MCF 10A (cell line): ENCODE measurements at regions of chr17 and their contacts with region 1.

Region 1: GRCh38 chr17:64661976-64662773 is at the start of gene SMURF2:
- DNase-seq: peak; percentile 74
- H3K4me3 Mint-ChIP-seq: peak within 1 kb of the TSS; percentile 99
- H3K27ac Mint-ChIP-seq: peak within 1 kb of the TSS; percentile 97
- H3K4me1 Mint-ChIP-seq: peaks cover 24% of the 10 kb centered on the region
- H3K27me3 Mint-ChIP-seq: no peaks in the 10 kb centered on the region
- CTCF ChIP-seq: no peak
- total RNA-seq, gene SMURF2: 49.2 and 55.8 TPM in 2 replicates

Region 2: DNA sequence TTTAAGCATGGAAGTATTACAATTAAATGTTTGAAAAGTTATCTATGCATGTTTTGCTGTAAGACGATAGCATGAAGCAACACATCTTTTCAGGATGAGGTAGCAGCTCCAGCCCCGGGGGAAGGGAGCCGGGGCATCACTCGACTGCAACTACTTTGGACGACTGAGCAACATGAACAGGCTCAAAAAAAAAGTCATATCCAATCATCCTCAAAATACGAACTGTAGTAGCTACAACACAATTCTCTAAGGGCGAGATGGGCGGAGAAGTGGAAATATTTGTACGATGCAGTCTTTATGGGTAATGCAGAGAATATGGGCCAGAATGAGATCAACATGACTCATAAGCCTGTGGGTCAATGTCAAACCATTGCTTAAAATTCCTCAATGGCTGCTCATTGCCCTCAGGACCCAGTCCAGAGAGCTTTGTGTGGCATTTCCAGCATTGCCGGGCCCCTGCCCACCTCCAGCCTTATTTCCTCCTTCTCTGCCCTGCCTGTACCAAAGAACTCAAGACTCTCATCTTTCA is 17.6 kb after region 1 on chr17:
- CTCF ChIA-PET with region 1: no interaction called
- POLR2A ChIA-PET with region 1: interaction called, 11 read pairs
- intact Hi-C with region 1: no loop called
- DNase-seq: peak; percentile 90
- H3K4me3 Mint-ChIP-seq: peak overlapping the region; percentile 39
- H3K27ac Mint-ChIP-seq: peak overlapping the region; percentile 54
- H3K4me1 Mint-ChIP-seq: peaks cover 20% of the 10 kb centered on the region
- H3K27me3 Mint-ChIP-seq: no peaks in the 10 kb centered on the region
- CTCF ChIP-seq: no peak

Region 3: GRCh38 chr17:64707019-64707591 is 44.9 kb after region 1 on chr17:
- CTCF ChIA-PET with region 1: no interaction called
- POLR2A ChIA-PET with region 1: interaction called, 4 read pairs
- intact Hi-C with region 1: loop called (anchors 5 kb)
- DNase-seq: peak; percentile 98
- H3K4me3 Mint-ChIP-seq: peak overlapping the region; percentile 38
- H3K27ac Mint-ChIP-seq: peak overlapping the region; percentile 73
- H3K4me1 Mint-ChIP-seq: peaks cover 19% of the 10 kb centered on the region
- H3K27me3 Mint-ChIP-seq: no peaks in the 10 kb centered on the region
- CTCF ChIP-seq: no peak

Region 4: DNA sequence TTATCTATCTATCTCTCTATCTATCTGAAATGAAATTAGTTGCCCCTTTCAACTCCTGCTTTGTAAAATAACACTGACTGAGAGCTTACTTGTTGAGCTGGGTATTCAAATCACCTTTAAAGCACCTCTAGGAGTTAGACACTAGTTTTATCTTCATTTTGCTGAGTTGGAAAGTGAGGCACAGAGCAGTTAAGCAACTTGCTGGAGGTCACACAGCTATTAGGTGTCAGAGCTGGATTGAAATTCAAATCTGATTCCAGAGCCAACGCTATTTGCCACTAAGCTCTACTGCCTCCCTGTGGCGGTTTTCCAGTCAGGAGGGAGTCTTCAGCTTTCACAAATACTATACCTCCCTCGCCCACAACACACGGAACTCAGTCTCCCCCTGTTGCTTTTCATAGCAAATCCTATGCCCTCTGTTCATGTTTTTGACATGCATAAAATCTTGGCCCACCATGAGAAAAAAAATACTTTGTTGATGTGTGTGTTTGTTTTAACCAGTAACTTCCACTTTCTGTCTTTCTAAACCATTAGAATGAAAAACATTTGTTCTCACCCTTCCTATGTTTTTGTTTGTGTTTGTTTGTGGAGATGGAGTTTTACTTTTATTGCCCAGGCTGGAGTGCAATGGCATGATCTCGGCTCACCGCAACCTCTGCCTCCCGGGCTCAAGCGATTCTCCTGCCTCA is 74.8 kb after region 1 on chr17:
- CTCF ChIA-PET with region 1: no interaction called
- POLR2A ChIA-PET with region 1: interaction called, 4 read pairs
- intact Hi-C with region 1: loop called (anchors 2 kb)
- DNase-seq: peak; percentile 59
- H3K4me3 Mint-ChIP-seq: no peak overlapping the region
- H3K27ac Mint-ChIP-seq: no peak overlapping the region
- H3K4me1 Mint-ChIP-seq: peaks cover 17% of the 10 kb centered on the region
- H3K27me3 Mint-ChIP-seq: no peaks in the 10 kb centered on the region
- CTCF ChIP-seq: peak; percentile 56

Region 5: DNA sequence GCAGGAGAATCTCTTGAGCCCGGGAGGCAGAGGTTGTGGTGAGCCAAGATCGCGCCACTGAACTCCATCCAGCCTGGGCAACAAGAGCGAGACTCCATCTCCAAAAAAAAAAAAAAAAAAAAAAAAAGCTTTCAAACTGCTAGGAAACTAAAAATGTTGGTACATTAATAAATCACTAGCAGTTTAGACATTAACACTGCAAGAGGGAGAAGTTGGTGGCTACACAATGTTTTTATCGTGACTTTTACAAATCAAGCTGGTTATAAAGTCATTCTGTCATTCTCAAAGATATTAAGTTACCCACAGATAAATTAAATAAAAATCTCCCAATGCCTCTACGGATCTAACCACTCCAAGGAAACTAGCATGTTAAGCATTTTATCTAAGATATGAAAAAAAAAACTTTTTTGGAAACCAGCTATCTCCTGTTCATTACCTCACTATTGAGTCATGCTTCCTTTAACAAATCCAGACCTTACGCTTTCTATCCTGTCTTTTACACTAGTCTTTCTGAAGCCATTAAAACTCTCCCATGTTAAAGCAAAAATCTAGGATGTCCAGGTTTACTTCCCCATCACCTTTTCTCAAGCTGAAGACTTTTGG is 85.9 kb after region 1 on chr17:
- CTCF ChIA-PET with region 1: no interaction called
- POLR2A ChIA-PET with region 1: no interaction called
- intact Hi-C with region 1: no loop called
- DNase-seq: no peak
- H3K4me3 Mint-ChIP-seq: no peak overlapping the region
- H3K27ac Mint-ChIP-seq: no peak overlapping the region
- H3K4me1 Mint-ChIP-seq: no peaks in the 10 kb centered on the region
- H3K27me3 Mint-ChIP-seq: no peaks in the 10 kb centered on the region
- CTCF ChIP-seq: no peak

Region 6: GRCh38 chr17:64773836-64774761 is 111.9 kb after region 1 on chr17:
- CTCF ChIA-PET with region 1: no interaction called
- POLR2A ChIA-PET with region 1: no interaction called
- intact Hi-C with region 1: loop called (anchors 10 kb)
- DNase-seq: peak; percentile 91
- H3K4me3 Mint-ChIP-seq: peak overlapping the region; percentile 66
- H3K27ac Mint-ChIP-seq: no peak overlapping the region
- H3K4me1 Mint-ChIP-seq: no peaks in the 10 kb centered on the region
- H3K27me3 Mint-ChIP-seq: no peaks in the 10 kb centered on the region
- CTCF ChIP-seq: peak; percentile 43

Region 7: DNA sequence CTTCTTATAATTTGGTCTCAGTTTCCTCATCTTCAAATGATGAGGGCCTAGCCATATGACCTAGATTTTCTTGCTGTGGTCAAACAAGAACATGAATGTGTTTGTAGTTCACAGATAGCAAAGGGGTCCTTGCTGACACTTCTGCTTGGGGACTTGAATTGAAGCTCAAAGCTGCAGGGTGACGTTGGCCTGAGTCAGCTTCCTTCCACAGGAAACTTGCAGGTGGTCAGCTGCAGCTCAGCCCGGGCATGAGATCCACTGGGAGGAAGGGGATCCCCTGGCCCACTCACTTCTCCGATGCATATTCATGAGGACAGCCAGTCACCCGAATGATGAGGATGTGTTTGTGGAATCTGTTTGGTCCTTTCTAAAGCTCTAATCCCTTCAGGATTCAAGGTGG is 941.9 kb after region 1 on chr17:
- CTCF ChIA-PET with region 1: no interaction called
- POLR2A ChIA-PET with region 1: no interaction called
- intact Hi-C with region 1: no loop called
- DNase-seq: no peak
- H3K4me3 Mint-ChIP-seq: no peak overlapping the region
- H3K27ac Mint-ChIP-seq: no peak overlapping the region
- H3K4me1 Mint-ChIP-seq: no peaks in the 10 kb centered on the region
- H3K27me3 Mint-ChIP-seq: no peaks in the 10 kb centered on the region
- CTCF ChIP-seq: no peak